ENCODE measurements at regions of chr5 and their contacts with region 1.

Region 1: GRCh38 chr5:132419502-132420468 is 50.3 kb downstream of the SLC22A5 start:
- DNase-seq: no peak
- H3K4me3 ChIP-seq: no peak overlapping the region
- CTCF ChIP-seq: peak; percentile 87

Region 2: DNA sequence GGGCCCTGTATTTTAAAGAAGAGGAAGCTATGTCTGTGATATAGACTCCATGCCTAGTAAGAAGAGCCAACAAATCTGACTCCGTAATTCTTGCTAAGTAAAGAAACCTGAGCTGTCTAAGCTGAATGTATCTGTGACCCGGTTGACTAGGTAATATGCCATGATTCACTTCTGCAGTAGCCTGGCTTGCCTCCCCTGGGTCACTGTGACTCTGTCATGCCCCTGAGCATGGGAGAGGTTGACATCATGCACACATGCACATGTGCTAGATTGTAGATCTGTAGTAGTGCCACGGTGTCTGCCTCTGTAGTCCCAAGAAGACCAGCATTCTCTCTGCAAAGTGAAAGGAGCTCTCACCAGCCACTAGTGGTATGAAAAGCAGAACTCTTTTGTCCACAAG is 41.2 kb before region 1 on chr5:
- CTCF ChIA-PET with region 1: no interaction called
- POLR2A ChIA-PET with region 1: no interaction called
- DNase-seq: no peak
- H3K4me3 ChIP-seq: no peak overlapping the region
- CTCF ChIP-seq: no peak

Region 3: DNA sequence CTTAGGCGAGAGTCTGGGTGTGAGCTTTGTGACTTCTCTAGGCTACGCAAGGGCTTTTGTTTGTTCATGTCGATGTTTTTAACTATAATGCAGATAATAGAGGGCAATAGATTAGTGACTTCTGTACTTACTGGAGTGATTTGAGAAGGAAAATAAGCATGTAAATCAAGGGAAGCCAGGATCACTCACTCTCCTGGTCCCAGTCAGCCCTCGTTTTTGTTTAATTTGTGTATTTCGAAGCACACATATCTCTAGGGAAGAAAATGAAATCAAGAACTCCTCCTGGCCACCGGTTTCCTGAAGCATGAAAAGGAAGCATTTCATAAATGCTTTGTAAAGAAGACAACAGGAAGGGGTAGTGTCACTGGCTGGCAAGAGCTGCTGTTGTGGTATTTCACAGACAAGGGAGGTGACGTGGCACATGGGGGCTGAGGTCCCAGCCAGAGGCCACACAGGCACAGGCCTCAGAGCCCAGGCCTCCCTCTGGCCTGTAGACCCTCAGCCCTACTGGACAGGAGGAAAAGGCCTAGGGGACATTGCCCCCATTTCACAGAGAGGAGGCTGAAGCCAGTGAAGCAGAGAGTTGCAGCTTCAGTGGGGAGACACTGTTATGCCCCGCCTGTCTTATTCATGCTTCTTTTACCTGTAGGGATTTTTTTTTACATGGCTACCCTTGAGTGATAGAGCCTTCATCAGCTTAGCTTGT is 36.7 kb after region 1 on chr5:
- CTCF ChIA-PET with region 1: interaction called, 10 read pairs
- POLR2A ChIA-PET with region 1: interaction called, 4 read pairs
- DNase-seq: no peak
- H3K4me3 ChIP-seq: no peak overlapping the region
- CTCF ChIP-seq: no peak

Region 4: DNA sequence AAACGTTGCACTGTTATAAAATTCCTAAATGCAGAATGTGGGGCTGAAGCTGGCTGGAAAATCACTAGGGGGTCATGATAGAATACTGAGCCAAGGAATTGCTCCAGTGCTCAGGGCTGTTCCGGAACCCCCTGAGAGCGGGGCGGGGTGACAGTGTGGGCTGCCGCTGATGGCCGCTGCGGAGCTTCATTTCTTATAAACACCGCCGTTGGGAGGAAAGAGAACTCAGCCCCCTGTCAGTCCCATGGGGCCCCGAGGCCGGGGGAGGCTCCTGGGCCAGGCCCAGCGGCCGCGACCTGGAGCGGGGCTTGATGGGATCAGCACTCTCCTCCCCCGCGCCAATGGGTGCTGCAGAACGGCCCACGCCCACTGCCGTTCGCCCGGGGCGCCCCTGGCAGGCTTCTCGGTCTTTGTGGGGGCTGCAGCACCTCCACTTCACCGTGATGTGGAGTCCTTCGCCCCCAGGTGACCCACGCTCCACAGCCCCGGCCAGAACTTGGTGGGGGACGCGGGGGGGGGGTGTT is 75.9 kb after region 1 on chr5:
- CTCF ChIA-PET with region 1: interaction called, 109 read pairs
- POLR2A ChIA-PET with region 1: interaction called, 24 read pairs
- DNase-seq: no peak
- H3K4me3 ChIP-seq: peak overlapping the region; percentile 69
- CTCF ChIP-seq: peak; percentile 4

Region 5: DNA sequence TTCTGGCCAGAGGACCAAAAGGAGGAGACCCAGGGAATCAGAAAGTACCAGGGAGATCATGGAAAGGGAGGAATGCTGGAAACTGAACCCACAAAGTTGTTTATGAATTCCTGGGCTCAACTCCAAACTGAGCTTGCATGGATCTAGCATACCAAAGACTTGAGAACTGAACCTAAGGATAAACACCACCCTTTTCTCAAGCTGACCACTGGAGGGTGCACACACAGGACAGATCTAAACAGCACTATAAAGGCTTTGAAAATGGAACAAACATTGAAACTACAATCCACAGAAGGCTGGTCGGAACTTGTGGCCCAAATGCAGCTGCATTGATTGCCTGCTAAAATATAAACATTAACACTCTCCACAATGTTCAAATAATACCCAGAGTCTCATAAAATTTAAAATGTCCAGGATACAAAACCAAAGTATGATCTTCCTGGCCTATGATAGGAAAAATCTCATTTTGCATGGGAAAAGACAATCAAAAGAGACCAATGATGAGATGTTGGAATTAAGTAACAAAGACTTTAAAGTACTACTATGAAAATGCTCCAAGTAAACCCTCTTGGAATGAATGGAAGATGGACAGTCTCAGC is 86.4 kb after region 1 on chr5:
- CTCF ChIA-PET with region 1: interaction called, 109 read pairs
- POLR2A ChIA-PET with region 1: no interaction called
- DNase-seq: peak; percentile 93
- H3K4me3 ChIP-seq: 0 out of 2 replicates have a peak overlapping the region, but pooled peaks have one; percentile 8
- CTCF ChIP-seq: peak; percentile 79

Measured in AG04449 (cell line).